Naive thymus-derived CD4-positive, alpha-beta T cell (primary cell): ENCODE measurements at regions of chr20 and their contacts with region 1.

Region 1: GRCh38 chr20:34069341-34070078 is 42.5 kb downstream of the EIF2S2 start:
- DNase-seq: peak in 8 of 9 donors; percentile 30 to 64 (median 53)
- ATAC-seq: peak; percentile 90
- H3K4me3 ChIP-seq: no peak overlapping the region
- H3K4me3 Mint-ChIP-seq: no peak overlapping the region
- H3K27ac ChIP-seq: peak overlapping the region; percentile 22
- H3K27ac Mint-ChIP-seq: peak overlapping the region in 7 of 9 donors; percentile 10 to 81 (median 41)
- H3K4me1 ChIP-seq: peaks cover 5 to 12% of the 10 kb centered on the region in 2 donors
- H3K4me1 Mint-ChIP-seq: peaks cover 29 to 51% (median 38%) of the 10 kb centered on the region in 7 donors
- H3K27me3 ChIP-seq: no peaks in the 10 kb centered on the region
- H3K27me3 Mint-ChIP-seq: no peaks in the 10 kb centered on the region

Region 2: GRCh38 chr20:33791959-33792597 is 277.4 kb before region 1 on chr20:
- CTCF ChIA-PET with region 1: interaction called, 8 read pairs
- POLR2A ChIA-PET with region 1: no interaction called
- intact Hi-C with region 1: loop called in 1 of 2 experiments (anchors 1 kb)
- DNase-seq: peak in 8 of 9 donors; percentile 23 to 67 (median 41)
- ATAC-seq: peak; percentile 74
- H3K4me3 ChIP-seq: no peak overlapping the region
- H3K4me3 Mint-ChIP-seq: no peak overlapping the region
- H3K27ac ChIP-seq: no peak overlapping the region
- H3K27ac Mint-ChIP-seq: no peak overlapping the region
- H3K4me1 ChIP-seq: peaks cover 0 to 9% of the 10 kb centered on the region in 2 donors
- H3K4me1 Mint-ChIP-seq: peaks cover 0 to 18% (median 4%) of the 10 kb centered on the region in 7 donors
- H3K27me3 ChIP-seq: no peaks in the 10 kb centered on the region
- H3K27me3 Mint-ChIP-seq: no peaks in the 10 kb centered on the region

Region 3: DNA sequence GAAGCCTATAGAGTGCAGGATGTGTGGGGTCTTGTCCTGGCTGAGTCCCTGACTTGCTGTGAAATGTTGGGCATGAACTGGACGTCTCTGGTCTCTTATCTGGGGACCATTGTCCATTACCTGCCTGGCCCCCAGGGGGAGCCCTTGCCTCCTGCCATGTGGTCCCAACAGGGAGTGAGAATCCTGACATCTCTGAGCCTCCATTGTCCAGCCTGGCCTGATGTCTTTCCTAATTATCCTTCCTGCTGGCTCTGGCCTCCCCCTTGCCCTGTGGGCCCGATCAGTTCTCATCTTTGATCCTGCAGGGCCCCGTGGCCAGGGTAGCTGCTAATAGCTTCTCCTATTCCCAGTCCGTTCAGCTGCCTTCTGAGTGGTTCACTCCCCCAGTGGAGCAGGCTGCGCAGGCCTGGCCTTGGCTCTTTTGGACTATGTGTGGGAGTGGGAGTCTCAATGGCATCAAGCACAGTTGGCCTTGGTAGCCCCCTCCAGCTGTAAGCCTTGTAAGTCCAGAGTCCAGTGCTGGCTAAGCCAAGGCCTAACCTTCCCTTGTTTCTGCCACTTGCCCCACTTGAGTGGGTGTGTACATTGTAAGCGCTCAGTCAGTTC is 153.7 kb before region 1 on chr20:
- CTCF ChIA-PET with region 1: interaction called, 45 read pairs
- POLR2A ChIA-PET with region 1: no interaction called
- intact Hi-C with region 1: loop called (anchors 1 to 5 kb)
- DNase-seq: peak in 8 of 9 donors; percentile 11 to 62 (median 30)
- ATAC-seq: peak; percentile 76
- H3K4me3 ChIP-seq: no peak overlapping the region
- H3K4me3 Mint-ChIP-seq: no peak overlapping the region
- H3K27ac ChIP-seq: no peak overlapping the region
- H3K27ac Mint-ChIP-seq: peak overlapping the region in 1 of 9 donors; percentile 25
- H3K4me1 ChIP-seq: peaks cover 0 to 4% of the 10 kb centered on the region in 2 donors
- H3K4me1 Mint-ChIP-seq: peaks cover 5 to 20% (median 15%) of the 10 kb centered on the region in 7 donors
- H3K27me3 ChIP-seq: no peaks in the 10 kb centered on the region
- H3K27me3 Mint-ChIP-seq: peaks cover 0 to 31% (median 0%) of the 10 kb centered on the region in 5 donors

Region 4: DNA sequence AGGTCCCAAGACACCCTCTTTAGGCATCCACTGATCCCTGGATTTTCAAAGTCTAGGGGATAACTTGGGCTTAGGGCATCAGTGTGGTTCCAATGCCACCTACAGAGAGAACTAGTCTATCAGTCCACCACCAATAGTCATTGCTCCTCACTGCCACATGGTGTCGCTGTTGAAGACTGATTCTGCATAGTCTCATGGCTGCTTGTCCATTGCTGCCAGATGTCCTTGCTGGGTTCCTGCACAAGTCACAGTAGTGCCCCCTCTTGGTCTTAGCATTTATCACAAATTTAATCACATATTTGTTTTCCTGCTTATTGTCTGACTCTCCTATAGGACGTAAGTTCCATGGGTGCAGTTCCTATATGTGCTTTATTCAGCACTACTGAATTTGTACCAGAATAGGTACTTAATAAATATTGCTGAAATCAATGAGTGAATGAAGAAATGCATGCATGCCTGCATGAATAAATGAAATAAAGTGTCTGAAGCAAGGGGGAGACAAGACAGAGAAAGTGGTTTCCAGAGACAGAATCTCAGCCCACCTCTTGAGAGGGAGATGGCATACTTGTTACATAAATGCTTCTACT is 121.7 kb before region 1 on chr20:
- CTCF ChIA-PET with region 1: no interaction called
- POLR2A ChIA-PET with region 1: no interaction called
- intact Hi-C with region 1: loop called in 1 of 2 experiments (anchors 1 kb)
- DNase-seq: peak in 8 of 9 donors; percentile 5 to 42 (median 30)
- ATAC-seq: peak; percentile 59
- H3K4me3 ChIP-seq: no peak overlapping the region
- H3K4me3 Mint-ChIP-seq: no peak overlapping the region
- H3K27ac ChIP-seq: no peak overlapping the region
- H3K27ac Mint-ChIP-seq: no peak overlapping the region
- H3K4me1 ChIP-seq: no peaks in the 10 kb centered on the region
- H3K4me1 Mint-ChIP-seq: no peaks in the 10 kb centered on the region
- H3K27me3 ChIP-seq: no peaks in the 10 kb centered on the region
- H3K27me3 Mint-ChIP-seq: peaks cover 0 to 11% (median 4%) of the 10 kb centered on the region in 5 donors

Region 5: GRCh38 chr20:34129518-34130162 is 60.1 kb after region 1 on chr20:
- CTCF ChIA-PET with region 1: interaction called, 10 read pairs
- POLR2A ChIA-PET with region 1: no interaction called
- intact Hi-C with region 1: loop called (anchors 1 kb)
- DNase-seq: peak; percentile 36 to 79 (median 67)
- ATAC-seq: peak; percentile 99
- H3K4me3 ChIP-seq: no peak overlapping the region
- H3K4me3 Mint-ChIP-seq: peak overlapping the region in 8 of 10 donors; percentile 18 to 73 (median 46)
- H3K27ac ChIP-seq: no peak overlapping the region
- H3K27ac Mint-ChIP-seq: no peak overlapping the region
- H3K4me1 ChIP-seq: no peaks in the 10 kb centered on the region
- H3K4me1 Mint-ChIP-seq: peaks cover 0 to 8% (median 4%) of the 10 kb centered on the region in 7 donors
- H3K27me3 ChIP-seq: no peaks in the 10 kb centered on the region
- H3K27me3 Mint-ChIP-seq: peaks cover 0 to 23% (median 7%) of the 10 kb centered on the region in 5 donors